Activated CD4-positive, alpha-beta memory T cell treated with anti-CD3 and anti-CD28 coated beads for 36 hours (primary cell): ENCODE measurements at regions of chr9 and their contacts with region 1.

Region 1: GRCh38 chr9:134858051-134858841 is 22.4 kb upstream of the FCN2 start:
- DNase-seq: peak; percentile 81
- H3K4me3 Mint-ChIP-seq: peak overlapping the region; percentile 54
- H3K27ac Mint-ChIP-seq: peak overlapping the region; percentile 91
- H3K4me1 Mint-ChIP-seq: peaks cover 17% of the 10 kb centered on the region
- H3K27me3 Mint-ChIP-seq: peaks cover 42% of the 10 kb centered on the region

Region 2: DNA sequence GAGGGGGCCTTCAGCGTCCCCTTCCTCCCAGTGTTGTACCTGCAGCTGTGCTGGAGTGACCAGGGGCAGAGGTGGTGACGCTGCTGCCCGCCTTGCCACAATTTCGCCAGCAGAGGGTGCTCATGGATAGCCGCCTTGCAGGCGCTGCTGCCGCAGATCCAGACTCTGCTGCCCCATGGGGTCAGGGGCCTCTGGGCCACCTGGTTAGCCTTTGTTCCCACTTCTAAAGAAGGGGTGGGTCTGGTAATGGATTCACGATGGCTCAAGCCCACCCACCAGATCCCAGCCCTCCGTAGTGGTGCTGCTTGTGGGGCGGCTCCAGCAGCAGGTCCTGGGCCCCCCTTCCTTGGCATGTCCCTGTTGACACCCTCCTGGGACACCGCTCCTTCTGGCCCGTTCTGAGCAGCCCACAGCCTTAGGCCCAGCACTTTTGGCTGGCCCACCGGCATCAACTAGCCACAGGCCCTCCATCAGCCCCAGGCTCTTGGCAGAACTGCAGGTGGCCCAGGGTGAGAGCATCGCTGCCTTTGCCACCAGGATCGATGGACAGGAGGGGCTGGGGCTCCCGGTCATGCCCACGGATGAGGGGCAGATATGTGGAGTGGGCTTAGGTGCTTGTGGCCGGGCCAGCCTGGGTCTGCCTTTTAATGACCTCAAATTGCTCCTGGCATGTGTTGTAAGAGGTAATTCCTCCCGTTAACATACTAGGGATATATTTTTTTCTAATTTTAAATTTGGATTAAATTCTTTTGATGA is 159.5 kb before region 1 on chr9:
- CTCF ChIA-PET with region 1: no interaction called
- POLR2A ChIA-PET with region 1: no interaction called
- intact Hi-C with region 1: loop called (anchors 1 kb)
- DNase-seq: peak; percentile 72
- H3K4me3 Mint-ChIP-seq: no peak overlapping the region
- H3K27ac Mint-ChIP-seq: no peak overlapping the region
- H3K4me1 Mint-ChIP-seq: no peaks in the 10 kb centered on the region
- H3K27me3 Mint-ChIP-seq: peaks cover 4% of the 10 kb centered on the region

Region 3: DNA sequence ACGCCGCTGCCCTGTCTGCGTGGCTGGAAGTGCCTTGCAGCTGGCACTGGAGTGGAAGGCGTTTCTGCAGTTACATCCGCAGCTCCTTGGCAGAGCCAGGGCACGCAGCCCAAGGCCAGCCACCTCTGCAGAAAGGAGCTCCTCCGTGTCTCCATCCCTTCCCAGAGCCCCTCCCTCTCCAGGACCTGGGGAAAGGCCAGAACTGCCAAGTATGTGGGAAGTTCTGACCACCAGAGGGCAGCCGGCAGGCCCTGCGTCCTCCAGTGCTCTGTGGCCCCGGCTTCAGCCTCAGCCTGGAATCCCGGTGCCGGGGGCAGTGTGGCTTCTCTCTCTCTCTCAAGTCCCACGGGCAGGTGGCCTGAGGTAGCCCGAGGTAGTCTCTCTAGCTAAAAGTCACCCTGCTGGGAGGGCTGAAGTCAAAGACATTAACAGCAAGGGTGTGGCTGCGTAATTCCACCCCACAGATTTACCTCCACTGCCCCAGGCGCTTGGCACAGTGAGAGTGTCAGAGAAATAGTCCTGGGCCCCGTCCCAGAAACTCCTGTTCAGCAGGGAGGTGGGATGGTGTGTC is 79.3 kb before region 1 on chr9:
- CTCF ChIA-PET with region 1: no interaction called
- POLR2A ChIA-PET with region 1: no interaction called
- intact Hi-C with region 1: loop called (anchors 2 kb)
- DNase-seq: no peak
- H3K4me3 Mint-ChIP-seq: no peak overlapping the region
- H3K27ac Mint-ChIP-seq: no peak overlapping the region
- H3K4me1 Mint-ChIP-seq: no peaks in the 10 kb centered on the region
- H3K27me3 Mint-ChIP-seq: no peaks in the 10 kb centered on the region